Thyroid gland (tissue), 4 donors: ENCODE measurements at regions of chr1 and their contacts with region 1.

Region 1: DNA sequence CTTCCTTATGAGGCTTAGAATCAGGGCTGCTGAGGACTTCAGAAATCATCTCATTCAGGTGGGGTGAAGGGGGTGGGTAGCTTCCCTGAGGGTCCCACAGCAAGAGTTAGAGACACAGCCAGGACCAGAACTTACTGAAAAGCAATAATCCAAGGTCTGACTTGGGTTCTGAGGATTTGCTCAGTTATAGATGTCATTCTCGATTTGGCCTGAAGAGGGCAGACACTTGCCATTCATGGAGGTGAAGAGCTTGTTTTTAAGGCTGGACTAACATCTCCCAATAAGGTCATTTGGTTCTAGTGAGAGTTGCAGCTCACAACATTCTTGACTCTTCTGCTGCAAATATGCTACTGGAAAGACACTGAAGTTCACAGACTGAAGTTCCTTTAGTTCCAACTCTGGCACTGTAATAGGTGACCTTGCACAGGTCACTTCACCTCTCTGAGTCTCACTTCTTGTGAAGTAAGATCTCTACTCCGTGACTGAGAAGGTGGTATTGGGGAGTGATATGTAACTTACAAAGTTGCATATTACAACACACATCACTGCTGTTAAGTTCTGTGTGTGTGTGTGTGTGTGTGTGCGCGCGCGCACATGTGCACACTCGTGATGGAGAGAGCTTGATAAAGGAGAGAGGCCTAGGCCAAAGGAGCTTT is 69.8 kb upstream of the DIRAS3 start:
- DNase-seq: peak; percentile 26 to 39
- H3K4me3 ChIP-seq: no peak overlapping the region
- H3K27ac ChIP-seq: peak overlapping the region in 1 of 3 donors; percentile 20
- H3K4me1 ChIP-seq: no peaks in the 10 kb centered on the region
- H3K27me3 ChIP-seq: no peaks in the 10 kb centered on the region
- CTCF ChIP-seq: peak; percentile 44 to 89 (median 78)
- POLR2A ChIP-seq: no peak

Region 2: DNA sequence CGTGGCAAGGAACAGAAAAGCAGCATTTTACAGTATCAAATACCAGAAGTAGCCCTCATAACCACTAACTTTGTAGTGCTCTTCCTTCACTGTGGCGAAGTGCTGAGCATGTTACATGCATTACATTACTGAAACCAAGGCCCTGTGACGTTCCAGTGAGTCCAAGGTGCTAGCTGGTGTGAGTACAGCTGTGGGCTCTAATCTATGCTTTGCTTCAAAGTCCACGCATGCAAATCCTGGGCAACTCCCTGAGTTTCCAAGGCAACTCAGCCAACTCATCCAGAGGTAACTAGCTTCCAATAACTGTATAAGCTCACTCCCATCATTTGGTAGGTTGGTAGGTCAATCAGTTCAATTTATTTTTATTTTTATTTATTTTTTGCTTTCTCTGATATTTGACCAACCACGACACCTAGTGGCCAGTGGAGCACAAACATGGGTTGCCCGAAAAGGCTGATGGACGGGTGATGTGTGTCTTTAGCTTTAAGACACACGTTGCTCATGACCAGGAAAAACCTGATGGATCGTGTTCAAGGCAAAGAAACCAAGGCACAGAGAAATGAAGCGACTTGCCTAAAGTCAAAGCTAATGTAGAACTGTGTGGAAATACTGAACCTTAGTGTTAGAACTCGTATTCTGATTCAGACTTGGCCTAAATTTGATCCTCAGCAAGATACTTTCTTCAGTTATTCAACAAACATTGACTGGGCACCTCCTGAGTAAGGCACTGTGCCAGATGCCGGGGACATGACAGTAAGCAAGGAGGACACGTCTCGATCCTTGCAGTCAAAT is 360.0 kb before region 1 on chr1:
- intact Hi-C with region 1: loop called (anchors 10 kb)
- DNase-seq: peak; percentile 65 to 74
- H3K4me3 ChIP-seq: no peak overlapping the region
- H3K27ac ChIP-seq: peak overlapping the region; percentile 67 to 90 (median 80)
- H3K4me1 ChIP-seq: peaks cover 28 to 55% of the 10 kb centered on the region in 2 donors
- H3K27me3 ChIP-seq: no peaks in the 10 kb centered on the region
- CTCF ChIP-seq: peak; percentile 64 to 95 (median 74)
- POLR2A ChIP-seq: no peak

Region 3: GRCh38 chr1:67853704-67854103 is 266.6 kb before region 1 on chr1:
- intact Hi-C with region 1: loop called (anchors 10 kb)
- DNase-seq: peak; percentile 33 to 38
- H3K4me3 ChIP-seq: no peak overlapping the region
- H3K27ac ChIP-seq: no peak overlapping the region
- H3K4me1 ChIP-seq: peaks cover 5 to 10% of the 10 kb centered on the region in 2 donors
- H3K27me3 ChIP-seq: no peaks in the 10 kb centered on the region
- CTCF ChIP-seq: peak in 2 of 6 experiments; percentile 30 to 42
- POLR2A ChIP-seq: no peak

Region 4: GRCh38 chr1:68232354-68233148 is 112.3 kb after region 1 on chr1 and contains the start of gene WLS:
- intact Hi-C with region 1: loop called (anchors 10 kb)
- DNase-seq: peak; percentile 79 to 80
- H3K4me3 ChIP-seq: peak within 1 kb of the TSS; percentile 48 to 70 (median 59)
- H3K27ac ChIP-seq: peak within 1 kb of the TSS; percentile 39 to 64 (median 45)
- H3K4me1 ChIP-seq: peaks cover 9% of the 10 kb centered on the region in 2 donors
- H3K27me3 ChIP-seq: no peaks in the 10 kb centered on the region
- CTCF ChIP-seq: peak in 1 of 6 experiments; percentile 17
- POLR2A ChIP-seq: peak in 1 of 2 donors; percentile 74
- total RNA-seq, gene WLS: 20.0 to 52.7 (median 46.7) TPM

Region 5: GRCh38 chr1:68344208-68344607 is 223.9 kb after region 1 on chr1:
- intact Hi-C with region 1: loop called (anchors 2 kb)
- DNase-seq: no peak
- H3K4me3 ChIP-seq: no peak overlapping the region
- H3K27ac ChIP-seq: no peak overlapping the region
- H3K4me1 ChIP-seq: no peaks in the 10 kb centered on the region
- H3K27me3 ChIP-seq: no peaks in the 10 kb centered on the region
- CTCF ChIP-seq: no peak
- POLR2A ChIP-seq: no peak